Right ventricle myocardium inferior (tissue), 1 donor: ENCODE measurements at regions of chr17 and their contacts with region 1.

Region 1: GRCh38 chr17:78840725-78841611 is at the start of gene USP36:
- DNase-seq: peak; percentile 100
- ATAC-seq: peak; percentile 98
- total RNA-seq, gene USP36: 18.4 TPM

Region 2: DNA sequence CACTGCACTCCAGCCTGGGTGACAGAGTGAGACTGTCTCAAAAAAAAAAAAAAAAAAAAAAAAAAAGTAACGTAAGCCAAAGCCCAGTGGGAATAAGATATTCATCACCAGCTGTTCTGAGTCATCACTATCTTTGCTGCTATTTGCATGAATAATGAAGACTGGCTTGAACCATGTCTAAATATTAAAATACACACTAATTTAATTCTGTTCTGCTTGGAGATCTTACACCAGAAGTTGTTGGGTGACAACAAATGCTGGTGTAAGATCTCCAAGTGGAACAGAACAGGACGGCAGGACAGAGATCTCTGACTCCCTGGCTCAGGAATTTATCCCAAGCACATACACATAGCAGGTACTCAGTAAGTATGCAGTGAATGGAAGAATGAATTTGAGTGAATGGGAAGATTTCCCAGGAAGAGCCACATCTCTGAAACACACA is 283.3 kb before region 1 on chr17:
- intact Hi-C with region 1: no loop called
- DNase-seq: no peak
- ATAC-seq: no peak

Region 3: DNA sequence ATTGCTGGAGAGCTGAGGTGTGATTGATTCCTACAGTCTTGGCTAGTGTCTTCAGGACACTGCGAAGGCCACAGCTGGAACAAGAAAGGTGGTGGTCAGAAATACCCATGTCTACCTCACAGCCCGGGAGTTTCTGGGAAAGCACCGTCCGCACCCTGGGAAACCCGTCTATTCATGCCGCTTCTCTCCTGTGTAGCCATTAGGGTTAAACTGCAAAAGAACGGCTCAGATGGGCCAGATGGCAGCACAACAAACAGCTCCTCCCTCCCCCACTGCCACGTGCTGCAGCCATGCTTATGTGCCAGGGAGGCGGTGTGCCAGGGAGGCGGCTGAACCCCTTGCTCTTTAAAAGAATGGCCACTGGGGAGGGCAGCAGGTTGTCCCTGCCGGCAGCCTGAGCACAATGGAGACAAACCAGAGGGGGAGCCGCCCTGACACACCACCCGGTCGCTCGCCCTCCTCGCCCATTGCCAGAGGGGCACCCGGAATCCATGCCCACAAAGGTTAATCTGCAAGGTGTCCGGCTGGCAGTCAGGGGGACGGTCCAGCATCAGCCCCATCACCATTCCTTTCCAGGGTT is 124.1 kb before region 1 on chr17:
- intact Hi-C with region 1: loop called (anchors 5 kb)
- DNase-seq: peak; percentile 79
- ATAC-seq: peak; percentile 85

Region 4: GRCh38 chr17:78736526-78737079 is 104.4 kb before region 1 on chr17:
- intact Hi-C with region 1: loop called (anchors 5 kb)
- DNase-seq: peak; percentile 88
- ATAC-seq: peak; percentile 76

Region 5: GRCh38 chr17:78781948-78782916 is 58.7 kb before region 1 on chr17 and contains the start of gene CYTH1:
- intact Hi-C with region 1: no loop called
- DNase-seq: peak; percentile 98
- ATAC-seq: peak; percentile 97
- total RNA-seq, gene CYTH1: 34.0 TPM

Region 6: GRCh38 chr17:78865682-78866390 is 24.9 kb after region 1 on chr17:
- intact Hi-C with region 1: no loop called
- DNase-seq: peak; percentile 85
- ATAC-seq: peak; percentile 74

Region 7: DNA sequence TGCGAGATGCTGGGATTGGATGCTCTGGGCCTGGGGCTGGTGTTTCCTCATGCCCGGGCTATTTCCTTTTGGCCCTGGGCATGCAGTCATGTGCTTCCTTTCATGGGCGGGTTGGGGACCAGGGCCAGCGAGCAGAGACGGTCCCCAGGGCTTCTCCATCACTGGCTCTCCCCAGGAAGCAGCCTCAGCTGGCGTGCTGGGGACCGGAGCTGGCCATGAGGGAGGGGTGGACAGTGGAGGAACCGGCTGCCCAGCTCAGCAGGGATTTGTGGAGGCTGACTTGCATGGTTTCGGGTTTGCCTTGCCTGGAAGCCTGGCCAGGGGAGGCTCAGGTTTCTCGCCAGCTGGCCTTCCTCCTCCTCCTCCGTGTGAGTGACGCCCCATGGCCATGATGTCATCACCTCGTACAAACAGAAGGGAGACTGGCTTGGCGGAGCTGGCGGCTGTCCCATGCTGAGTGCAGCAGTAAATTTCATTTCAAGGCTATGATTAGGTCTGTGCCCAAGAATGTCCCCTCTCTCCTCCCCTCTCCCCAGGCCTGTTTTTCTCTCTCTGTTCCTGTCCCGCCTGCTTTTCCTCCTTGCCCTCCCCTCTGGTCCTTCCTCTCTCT is 93.1 kb after region 1 on chr17:
- intact Hi-C with region 1: loop called (anchors 1 kb)
- DNase-seq: peak; percentile 95
- ATAC-seq: peak; percentile 92